Calu3 (cell line): ENCODE measurements at regions of chr1 and their contacts with region 1.

Region 1: DNA sequence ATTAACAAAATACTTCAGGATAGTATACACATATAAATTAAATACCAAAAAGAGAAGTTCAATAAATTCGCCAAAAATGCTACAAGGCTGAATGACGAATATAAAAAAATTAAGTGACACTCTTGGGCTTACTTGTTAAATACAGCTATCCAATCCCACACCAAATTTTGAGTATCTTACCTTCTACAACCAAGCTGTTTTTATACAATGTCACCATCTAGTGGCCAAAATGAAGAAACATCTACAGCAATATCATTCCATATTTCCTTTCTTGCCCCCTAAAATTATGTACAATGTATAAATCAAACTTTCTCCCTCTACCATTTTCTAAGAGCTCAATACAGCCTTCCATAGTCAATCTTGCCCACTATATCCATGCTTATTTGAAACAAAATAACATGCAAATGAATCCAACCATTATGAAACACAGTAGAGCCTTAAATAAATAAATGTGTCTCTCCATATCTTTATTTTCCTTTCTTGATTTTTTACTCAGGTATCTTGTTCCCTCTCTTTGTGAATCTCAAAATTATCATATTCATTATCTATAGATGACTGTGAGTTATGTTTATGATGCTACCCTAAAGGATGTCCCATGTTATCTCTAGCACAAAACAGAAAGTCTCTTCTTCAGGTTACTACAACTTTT is 86.3 kb downstream of the ACBD6 start:
- DNase-seq: no peak
- H3K4me3 Mint-ChIP-seq: no peak overlapping the region
- H3K27ac Mint-ChIP-seq: no peak overlapping the region
- H3K4me1 Mint-ChIP-seq: no peaks in the 10 kb centered on the region
- H3K27me3 Mint-ChIP-seq: no peaks in the 10 kb centered on the region
- CTCF ChIP-seq: peak; percentile 63

Region 2: DNA sequence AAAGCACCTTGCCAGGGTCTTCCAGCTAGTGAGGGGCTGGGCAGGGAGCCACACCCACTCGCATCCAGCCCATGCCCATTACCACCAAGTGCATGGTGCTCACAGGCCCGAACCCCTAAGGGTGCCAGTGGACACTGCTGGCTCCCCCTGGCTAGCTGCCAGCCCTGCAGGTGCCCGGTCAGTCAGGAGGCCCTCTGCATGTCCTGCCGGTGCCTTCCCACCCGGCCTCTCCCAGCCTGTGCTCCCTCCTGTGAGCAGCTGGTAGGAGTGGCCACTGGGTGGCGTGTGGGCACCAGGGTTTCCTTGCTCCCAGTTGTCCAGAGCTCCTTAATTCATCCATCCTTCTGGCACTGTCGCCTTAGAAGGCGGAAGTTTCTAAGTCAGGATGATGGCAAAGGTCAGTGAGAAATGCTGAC is 228.0 kb before region 1 on chr1:
- CTCF ChIA-PET with region 1: interaction called, 11 read pairs
- intact Hi-C with region 1: loop called (anchors 1 kb)
- DNase-seq: peak; percentile 79
- H3K4me3 Mint-ChIP-seq: no peak overlapping the region
- H3K27ac Mint-ChIP-seq: no peak overlapping the region
- H3K4me1 Mint-ChIP-seq: peaks cover 12% of the 10 kb centered on the region
- H3K27me3 Mint-ChIP-seq: no peaks in the 10 kb centered on the region
- CTCF ChIP-seq: peak; percentile 84

Region 3: DNA sequence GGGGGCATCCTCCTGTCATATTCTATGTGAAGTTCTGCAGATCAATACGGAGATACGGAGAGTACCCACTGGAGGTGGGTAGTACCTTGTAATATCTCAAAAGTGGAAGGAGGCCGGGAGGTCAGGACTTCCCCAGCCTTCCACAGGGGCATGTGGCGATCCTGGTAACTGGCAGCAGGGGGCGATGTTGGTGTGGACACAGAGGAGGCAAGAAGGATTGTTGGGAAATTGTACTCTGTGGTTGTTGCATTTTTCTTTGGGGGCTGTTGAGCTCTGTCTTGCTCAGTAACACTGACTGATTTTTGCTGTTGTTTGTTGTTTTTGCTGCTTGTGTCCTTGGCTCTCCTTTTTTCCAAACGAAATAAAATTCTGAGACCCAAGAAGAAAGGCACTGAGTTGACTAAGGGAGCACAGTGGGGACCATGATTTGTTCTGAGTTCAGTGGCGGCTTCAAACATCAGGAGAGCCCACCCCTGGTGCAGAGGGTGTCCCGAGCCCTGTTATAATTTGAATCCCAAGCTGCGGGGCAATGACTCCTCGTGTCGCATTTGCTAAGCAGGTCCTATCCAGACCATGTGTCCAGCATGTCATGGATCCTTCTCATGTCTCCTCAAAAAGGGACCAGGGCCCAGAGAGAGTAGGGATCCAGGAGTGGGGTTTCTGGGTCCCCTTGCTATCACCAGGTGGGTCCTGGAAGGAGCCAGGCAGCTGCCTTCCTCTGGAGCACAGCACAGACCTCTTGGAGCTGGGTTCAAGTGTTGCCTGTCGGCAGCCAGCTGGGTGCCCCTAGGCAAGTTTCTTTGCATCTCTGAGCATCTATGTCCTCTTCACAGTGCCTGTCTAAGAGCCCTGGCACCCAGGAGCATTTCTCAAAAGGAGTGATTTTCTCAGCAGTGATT is 163.2 kb before region 1 on chr1:
- CTCF ChIA-PET with region 1: interaction called, 11 read pairs
- intact Hi-C with region 1: loop called (anchors 1 kb)
- DNase-seq: peak; percentile 90
- H3K4me3 Mint-ChIP-seq: no peak overlapping the region
- H3K27ac Mint-ChIP-seq: no peak overlapping the region
- H3K4me1 Mint-ChIP-seq: no peaks in the 10 kb centered on the region
- H3K27me3 Mint-ChIP-seq: peaks cover 20% of the 10 kb centered on the region
- CTCF ChIP-seq: peak; percentile 94

Region 4: GRCh38 chr1:180269761-180270527 is 146.2 kb before region 1 on chr1:
- CTCF ChIA-PET with region 1: no interaction called
- intact Hi-C with region 1: loop called (anchors 5 kb)
- DNase-seq: peak; percentile 40
- H3K4me3 Mint-ChIP-seq: no peak overlapping the region
- H3K27ac Mint-ChIP-seq: no peak overlapping the region
- H3K4me1 Mint-ChIP-seq: peaks cover 13% of the 10 kb centered on the region
- H3K27me3 Mint-ChIP-seq: peaks cover 3% of the 10 kb centered on the region
- CTCF ChIP-seq: peak; percentile 37

Region 5: DNA sequence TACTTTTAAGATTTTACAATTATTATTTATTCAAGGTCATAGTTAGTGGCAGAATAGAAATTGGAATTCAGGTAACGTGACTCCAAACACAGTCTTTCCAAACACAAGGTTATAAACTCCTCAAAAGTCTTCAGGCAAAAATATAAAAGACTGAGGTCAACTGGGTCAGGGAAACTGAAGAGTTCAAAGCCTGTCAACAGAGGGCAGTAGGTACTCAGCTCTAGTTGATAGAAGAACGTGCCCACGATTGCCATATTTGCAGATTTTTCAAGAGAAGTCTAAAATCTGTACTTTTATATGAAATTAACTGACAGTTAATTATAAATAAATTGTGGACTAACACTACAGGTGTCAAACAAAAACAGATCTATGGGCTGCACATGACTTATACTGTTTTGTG is 51.1 kb before region 1 on chr1:
- CTCF ChIA-PET with region 1: interaction called, 4 read pairs
- intact Hi-C with region 1: loop called (anchors 2 kb)
- DNase-seq: peak; percentile 20
- H3K4me3 Mint-ChIP-seq: no peak overlapping the region
- H3K27ac Mint-ChIP-seq: no peak overlapping the region
- H3K4me1 Mint-ChIP-seq: peaks cover 12% of the 10 kb centered on the region
- H3K27me3 Mint-ChIP-seq: no peaks in the 10 kb centered on the region
- CTCF ChIP-seq: no peak